PC-3 (cell line): ENCODE measurements at regions of chr1 and their contacts with region 1.

Region 1: DNA sequence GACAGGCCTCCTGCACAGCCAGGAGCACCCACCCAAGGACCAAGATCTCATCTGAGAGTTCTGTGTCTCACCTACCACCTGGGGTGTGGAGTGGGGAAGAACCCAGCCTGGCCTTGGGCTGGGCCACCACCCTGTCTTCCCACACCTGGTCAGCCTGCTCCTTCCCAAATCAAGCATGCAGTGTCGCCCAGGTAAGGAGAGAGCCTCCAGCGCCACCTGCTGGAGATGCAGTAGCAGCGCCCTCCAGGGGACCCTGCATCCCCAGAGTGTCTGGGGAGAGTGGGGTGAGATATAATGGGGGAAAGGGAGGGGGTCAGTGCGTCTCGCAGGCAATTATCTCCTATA is 32.3 kb downstream of the KIAA2013 start:
- DNase-seq: peak; percentile 73
- ATAC-seq: peak; percentile 99
- H3K4me3 ChIP-seq: no peak overlapping the region
- H3K27ac ChIP-seq: no peak overlapping the region
- H3K4me1 ChIP-seq: no peaks in the 10 kb centered on the region
- H3K27me3 ChIP-seq: 0 out of 2 replicates have a peak, but pooled peaks cover 5% of the 10 kb centered on the region
- CTCF ChIP-seq: peak; percentile 95

Region 2: GRCh38 chr1:11784993-11785769 is 108.7 kb before region 1 on chr1:
- CTCF ChIA-PET with region 1: no interaction called
- POLR2A ChIA-PET with region 1: no interaction called
- intact Hi-C with region 1: loop called (anchors 1 kb)
- DNase-seq: peak; percentile 61
- ATAC-seq: peak; percentile 79
- H3K4me3 ChIP-seq: no peak overlapping the region
- H3K27ac ChIP-seq: no peak overlapping the region
- H3K4me1 ChIP-seq: peaks cover 12% of the 10 kb centered on the region; the same call in 1 of the 2 replicates
- H3K27me3 ChIP-seq: no peaks in the 10 kb centered on the region
- CTCF ChIP-seq: peak; percentile 90

Region 3: GRCh38 chr1:11838349-11839272 is 55.3 kb before region 1 on chr1:
- CTCF ChIA-PET with region 1: interaction called, 3 read pairs
- POLR2A ChIA-PET with region 1: no interaction called
- intact Hi-C with region 1: loop called (anchors 1 kb)
- DNase-seq: peak; percentile 64
- ATAC-seq: peak; percentile 95
- H3K4me3 ChIP-seq: no peak overlapping the region
- H3K27ac ChIP-seq: no peak overlapping the region
- H3K4me1 ChIP-seq: no peaks in the 10 kb centered on the region
- H3K27me3 ChIP-seq: no peaks in the 10 kb centered on the region
- CTCF ChIP-seq: peak; percentile 95

Region 4: DNA sequence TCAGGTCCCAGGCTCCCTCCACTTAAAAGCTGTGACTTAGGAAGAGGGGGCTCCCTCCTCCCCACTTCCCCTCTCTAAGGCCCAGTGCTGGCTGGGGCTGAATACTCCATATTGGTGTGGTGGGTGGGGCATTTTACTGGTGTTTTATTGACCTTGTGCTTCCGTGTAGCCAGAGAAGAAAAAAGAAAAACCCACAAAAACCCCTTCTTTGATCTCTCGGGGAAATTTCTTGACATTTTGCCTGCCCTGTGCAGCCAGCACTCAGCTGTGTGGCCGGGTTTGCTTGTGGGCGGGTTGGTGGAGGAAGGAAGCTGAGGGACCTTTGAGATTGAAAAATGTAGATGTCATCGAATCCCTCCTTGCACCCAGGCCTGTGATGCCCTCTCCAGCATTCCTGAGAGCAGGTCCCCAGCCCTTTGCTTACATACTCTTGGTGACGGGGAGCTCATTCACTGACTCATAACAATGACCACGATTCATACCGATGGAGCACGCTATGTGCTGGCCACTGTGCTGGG is 194.0 kb after region 1 on chr1:
- CTCF ChIA-PET with region 1: no interaction called
- POLR2A ChIA-PET with region 1: no interaction called
- intact Hi-C with region 1: no loop called
- DNase-seq: no peak
- ATAC-seq: no peak
- H3K4me3 ChIP-seq: no peak overlapping the region
- H3K27ac ChIP-seq: no peak overlapping the region
- H3K4me1 ChIP-seq: 0 out of 2 replicates have a peak, but pooled peaks cover 4% of the 10 kb centered on the region
- H3K27me3 ChIP-seq: no peaks in the 10 kb centered on the region
- CTCF ChIP-seq: no peak